ENCODE measurements at regions of chr9 and their contacts with region 1.

Region 1: GRCh38 chr9:127734747-127735529 is at the start of gene TOR2A:
- DNase-seq: peak; percentile 99
- H3K4me3 ChIP-seq: peak within 1 kb of the TSS; percentile 73 to 89 (median 82)
- H3K27ac ChIP-seq: peak within 1 kb of the TSS; percentile 94 to 98 (median 95)
- H3K4me1 ChIP-seq: peaks cover 11 to 35% (median 25%) of the 10 kb centered on the region in 4 donors
- H3K27me3 ChIP-seq: peaks cover 0 to 10% (median 0%) of the 10 kb centered on the region in 4 donors
- CTCF ChIP-seq: peak; percentile 89 to 100 (median 92)
- EP300 ChIP-seq: no peak
- POLR2A ChIP-seq: peak; percentile 55
- total RNA-seq, gene TOR2A: 5.4 to 9.2 (median 7.0) TPM

Region 2: DNA sequence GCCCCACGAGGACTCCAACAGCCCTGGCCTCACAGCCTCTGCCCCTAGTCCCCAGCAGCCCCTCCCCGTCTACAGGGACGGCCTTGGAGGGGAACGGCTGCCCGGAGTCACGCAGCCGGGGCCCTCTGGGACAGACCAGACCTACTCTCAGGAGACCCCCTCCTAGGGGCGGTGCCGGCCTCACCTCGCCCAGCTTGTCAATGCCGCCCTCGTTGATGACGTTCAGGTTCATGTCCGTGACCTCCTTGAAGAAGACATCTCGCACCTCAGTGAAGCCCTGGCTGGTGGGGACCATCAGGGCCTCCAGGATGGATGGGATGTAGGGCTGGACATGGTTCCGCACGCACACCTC is 225.0 kb before region 1 on chr9:
- intact Hi-C with region 1: loop called (anchors 5 kb)
- DNase-seq: no peak
- H3K4me3 ChIP-seq: no peak overlapping the region
- H3K27ac ChIP-seq: peak overlapping the region; percentile 11 to 59 (median 22)
- H3K4me1 ChIP-seq: peaks cover 3 to 9% (median 7%) of the 10 kb centered on the region in 4 donors
- H3K27me3 ChIP-seq: no peaks in the 10 kb centered on the region
- CTCF ChIP-seq: no peak
- EP300 ChIP-seq: no peak
- POLR2A ChIP-seq: no peak

Region 3: GRCh38 chr9:127586537-127586936 is 148.4 kb before region 1 on chr9:
- intact Hi-C with region 1: loop called (anchors 2 kb)
- DNase-seq: peak; percentile 93
- H3K4me3 ChIP-seq: no peak overlapping the region
- H3K27ac ChIP-seq: no peak overlapping the region
- H3K4me1 ChIP-seq: peaks cover 0 to 35% (median 26%) of the 10 kb centered on the region in 4 donors
- H3K27me3 ChIP-seq: no peaks in the 10 kb centered on the region
- CTCF ChIP-seq: peak; percentile 87 to 95 (median 93)
- EP300 ChIP-seq: no peak
- POLR2A ChIP-seq: no peak

Region 4: DNA sequence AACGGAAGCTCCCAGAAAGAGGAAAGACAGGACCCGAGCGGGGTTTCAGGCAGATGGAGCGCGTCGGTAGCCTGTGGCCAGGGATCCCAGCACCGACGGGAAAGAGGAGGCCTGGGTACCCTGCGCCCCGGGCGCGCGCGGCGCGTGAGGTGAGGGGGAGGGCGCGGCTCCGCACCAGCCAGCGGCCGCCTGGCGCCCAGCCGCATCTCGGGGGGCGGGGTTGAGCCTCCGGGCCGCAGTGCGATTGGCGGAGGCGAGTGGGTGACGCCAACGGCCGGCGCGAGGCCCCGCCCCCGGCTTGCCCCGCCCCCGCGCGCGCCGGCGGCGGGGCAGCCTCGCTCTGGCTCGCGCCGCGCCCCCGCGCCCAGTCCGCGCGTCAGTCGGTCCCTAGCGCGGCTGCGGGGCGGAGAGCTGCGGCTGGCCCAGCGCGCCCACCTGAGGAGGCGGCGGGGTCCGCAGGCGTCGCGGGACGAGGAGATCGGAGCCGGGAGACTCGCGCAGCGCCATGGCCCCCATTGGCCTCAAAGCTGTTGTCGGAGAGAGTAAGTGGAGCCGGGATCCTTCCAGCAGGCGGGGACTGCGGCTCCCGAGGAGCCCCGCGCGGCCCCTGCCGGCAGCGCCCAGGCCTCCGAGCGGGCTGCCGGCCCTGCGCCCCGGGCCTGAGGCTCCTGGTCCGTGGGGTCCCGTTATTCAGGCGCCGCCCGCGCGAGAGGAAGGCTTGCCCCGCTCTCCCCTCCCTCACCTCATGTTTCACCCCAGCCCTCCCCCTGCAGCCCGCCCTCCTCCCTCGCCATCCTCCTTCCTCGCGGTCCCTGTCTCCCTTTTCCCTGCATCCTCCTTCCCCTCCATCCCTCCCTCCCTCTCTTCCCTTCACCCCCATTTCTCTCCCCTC is 122.8 kb before region 1 on chr9 and contains the start of gene STXBP1:
- intact Hi-C with region 1: loop called (anchors 5 kb)
- DNase-seq: peak; percentile 95
- H3K4me3 ChIP-seq: peak within 1 kb of the TSS; percentile 88 to 98 (median 95)
- H3K27ac ChIP-seq: peak within 1 kb of the TSS; percentile 90 to 95 (median 94)
- H3K4me1 ChIP-seq: peaks cover 11 to 42% (median 38%) of the 10 kb centered on the region in 4 donors
- H3K27me3 ChIP-seq: no peaks in the 10 kb centered on the region
- CTCF ChIP-seq: peak in 1 of 3 experiments; percentile 27
- EP300 ChIP-seq: no peak
- POLR2A ChIP-seq: peak; percentile 72
- total RNA-seq, gene STXBP1: 17.2 to 34.0 (median 19.8) TPM

Region 5: GRCh38 chr9:127785023-127785932 is 50.3 kb after region 1 on chr9:
- intact Hi-C with region 1: loop called (anchors 1 kb)
- DNase-seq: peak; percentile 97
- H3K4me3 ChIP-seq: peak overlapping the region; percentile 73 to 99 (median 87)
- H3K27ac ChIP-seq: peak overlapping the region; percentile 92 to 98 (median 97)
- H3K4me1 ChIP-seq: peaks cover 47 to 58% (median 49%) of the 10 kb centered on the region in 4 donors
- H3K27me3 ChIP-seq: no peaks in the 10 kb centered on the region
- CTCF ChIP-seq: peak; percentile 94 to 99 (median 99)
- EP300 ChIP-seq: no peak
- POLR2A ChIP-seq: no peak

Region 6: GRCh38 chr9:127869310-127870152 is 134.6 kb after region 1 on chr9:
- intact Hi-C with region 1: loop called (anchors 5 kb)
- DNase-seq: peak; percentile 96
- H3K4me3 ChIP-seq: no peak overlapping the region
- H3K27ac ChIP-seq: peak overlapping the region in 2 of 4 donors; percentile 30 to 35
- H3K4me1 ChIP-seq: peaks cover 27 to 43% (median 32%) of the 10 kb centered on the region in 4 donors
- H3K27me3 ChIP-seq: no peaks in the 10 kb centered on the region
- CTCF ChIP-seq: peak; percentile 79 to 87 (median 81)
- EP300 ChIP-seq: no peak
- POLR2A ChIP-seq: no peak

Region 7: DNA sequence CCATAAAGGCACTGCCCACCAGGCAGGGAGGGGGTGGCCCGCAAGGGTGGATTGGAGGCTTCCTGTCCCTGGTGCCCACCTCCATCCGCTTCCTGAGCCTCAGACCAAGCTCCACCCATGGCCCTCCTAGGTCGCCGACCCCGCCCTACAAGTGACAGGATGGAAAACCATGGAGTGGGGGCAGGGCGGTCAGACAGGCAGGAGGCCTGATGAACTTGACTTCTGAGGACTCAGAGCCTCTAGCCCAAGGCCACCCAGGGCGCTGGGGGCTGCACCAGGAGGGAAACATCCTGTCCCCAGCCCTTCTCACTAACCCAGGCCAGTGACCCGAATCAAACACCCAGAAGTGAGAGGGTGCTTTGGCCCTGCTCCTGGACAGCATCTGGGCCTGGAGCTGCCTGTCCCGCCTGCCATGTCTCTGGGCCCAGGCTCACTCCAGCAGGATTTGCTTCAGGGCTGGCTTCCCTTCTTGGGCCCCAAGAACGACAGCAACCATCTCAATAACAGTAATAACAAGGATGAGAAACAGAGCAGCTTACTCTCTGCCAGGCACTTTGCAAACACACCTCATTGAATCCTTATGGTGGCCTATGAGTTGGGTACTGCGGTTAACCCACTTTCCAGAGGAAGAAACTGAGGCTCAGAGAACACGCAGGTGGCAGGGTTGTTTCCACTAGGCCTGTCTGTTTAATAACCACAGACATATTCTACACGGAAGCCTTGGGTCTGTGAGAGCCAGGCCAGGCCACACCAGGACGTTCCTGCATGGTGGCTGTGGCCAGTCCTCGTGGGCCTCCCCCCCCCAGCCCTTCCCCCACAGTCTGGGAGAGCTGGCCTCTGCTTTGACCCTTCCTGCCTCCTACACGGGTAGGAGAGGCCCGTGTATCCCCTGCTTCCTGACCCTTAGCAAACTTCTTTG is 168.9 kb after region 1 on chr9:
- intact Hi-C with region 1: no loop called
- DNase-seq: no peak
- H3K4me3 ChIP-seq: peak overlapping the region in 1 of 4 donors; percentile 9
- H3K27ac ChIP-seq: peak overlapping the region; percentile 60 to 71 (median 68)
- H3K4me1 ChIP-seq: peaks cover 42 to 66% (median 54%) of the 10 kb centered on the region in 4 donors
- H3K27me3 ChIP-seq: no peaks in the 10 kb centered on the region
- CTCF ChIP-seq: no peak
- EP300 ChIP-seq: no peak
- POLR2A ChIP-seq: no peak

Region 8: DNA sequence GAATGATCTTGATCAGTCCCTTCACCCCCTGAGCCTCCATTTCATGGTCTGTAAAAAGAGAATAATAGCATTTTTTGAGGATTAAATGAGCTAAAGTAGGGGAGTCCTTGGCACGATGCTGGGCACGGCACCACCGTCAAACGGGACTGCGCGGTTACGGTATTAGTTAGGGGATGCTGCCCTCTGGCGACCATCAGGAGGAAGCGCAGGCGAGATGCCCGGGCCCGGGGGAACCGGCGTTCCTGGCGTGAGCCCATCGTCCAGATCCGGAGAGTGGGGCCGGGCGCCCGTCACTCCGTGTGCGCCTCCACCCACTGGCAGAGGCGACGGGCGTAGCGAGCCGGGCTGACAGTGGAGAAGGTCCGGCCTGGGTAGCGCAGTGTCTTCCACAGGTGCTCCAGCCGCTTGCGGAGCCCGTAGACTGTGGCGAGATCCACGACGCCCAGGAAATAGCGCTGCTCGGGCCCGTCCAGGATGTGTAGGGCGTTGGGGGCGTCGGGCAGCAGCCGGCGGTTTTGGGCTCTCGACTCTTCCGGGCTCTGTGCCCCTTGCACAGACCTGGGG is 186.7 kb after region 1 on chr9:
- intact Hi-C with region 1: loop called (anchors 1 kb)
- DNase-seq: no peak
- H3K4me3 ChIP-seq: peak overlapping the region; percentile 14 to 47 (median 24)
- H3K27ac ChIP-seq: no peak overlapping the region
- H3K4me1 ChIP-seq: peaks cover 41 to 53% (median 47%) of the 10 kb centered on the region in 4 donors
- H3K27me3 ChIP-seq: peaks cover 0 to 39% (median 5%) of the 10 kb centered on the region in 4 donors
- CTCF ChIP-seq: peak; percentile 95 to 99 (median 97)
- EP300 ChIP-seq: no peak
- POLR2A ChIP-seq: no peak